Activated CD4-positive, alpha-beta T cell treated with anti-CD3 and anti-CD28 coated beads, Interleukin-2, amount 10 ng/mL, durations not matched to agents 24 days and 14 days (primary cell): ENCODE measurements at regions of chr4 and their contacts with region 1.

Region 1: GRCh38 chr4:48016141-48017103 is at the starts of genes CNGA1 and NIPAL1:
- DNase-seq: peak; percentile 91
- H3K4me3 Mint-ChIP-seq: peak within 1 kb of the TSS; percentile 80
- H3K27ac Mint-ChIP-seq: peak within 1 kb of the TSS; percentile 45
- H3K4me1 Mint-ChIP-seq: peaks cover 20% of the 10 kb centered on the region
- H3K27me3 Mint-ChIP-seq: peaks cover 30% of the 10 kb centered on the region
- total RNA-seq, gene CNGA1: not detected in 2 replicates
- total RNA-seq, gene NIPAL1: 3.6 and 3.8 TPM in 2 replicates

Region 2: GRCh38 chr4:47852136-47852535 is 164.3 kb before region 1 on chr4:
- intact Hi-C with region 1: no loop called
- DNase-seq: no peak
- H3K4me3 Mint-ChIP-seq: no peak overlapping the region
- H3K27ac Mint-ChIP-seq: no peak overlapping the region
- H3K4me1 Mint-ChIP-seq: no peaks in the 10 kb centered on the region
- H3K27me3 Mint-ChIP-seq: no peaks in the 10 kb centered on the region

Region 3: GRCh38 chr4:48027653-48028052 is 11.2 kb after region 1 on chr4:
- intact Hi-C with region 1: loop called (anchors 1 kb)
- DNase-seq: no peak
- H3K4me3 Mint-ChIP-seq: no peak overlapping the region
- H3K27ac Mint-ChIP-seq: no peak overlapping the region
- H3K4me1 Mint-ChIP-seq: peaks cover 17% of the 10 kb centered on the region
- H3K27me3 Mint-ChIP-seq: peaks cover under 1% of the 10 kb centered on the region

Region 4: DNA sequence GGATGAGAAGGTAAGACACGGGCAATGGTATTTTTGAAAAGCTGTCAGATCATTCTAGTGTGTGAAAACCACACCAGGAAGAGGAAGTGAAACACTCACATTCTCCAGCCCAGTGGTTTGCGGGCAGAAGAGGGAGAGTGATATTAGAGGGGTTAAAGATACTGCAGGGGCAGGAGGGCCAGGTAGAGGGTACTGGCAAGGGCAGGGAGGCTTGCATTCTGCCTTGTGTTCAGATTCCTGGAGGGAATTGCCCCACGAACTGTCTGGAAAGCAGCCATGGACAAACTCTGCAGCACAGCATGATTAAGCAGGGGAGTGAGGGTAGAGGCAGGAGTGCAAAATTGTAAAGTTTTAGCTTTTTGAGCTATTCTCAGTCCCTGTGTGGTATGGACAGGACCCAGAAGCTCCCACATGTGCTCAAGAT is 31.0 kb after region 1 on chr4:
- intact Hi-C with region 1: loop called (anchors 1 kb)
- DNase-seq: peak; percentile 89
- H3K4me3 Mint-ChIP-seq: peak overlapping the region; percentile 38
- H3K27ac Mint-ChIP-seq: peak overlapping the region; percentile 61
- H3K4me1 Mint-ChIP-seq: peaks cover 39% of the 10 kb centered on the region
- H3K27me3 Mint-ChIP-seq: peaks cover 62% of the 10 kb centered on the region

Region 5: GRCh38 chr4:48065587-48066052 is 49.2 kb after region 1 on chr4:
- intact Hi-C with region 1: loop called (anchors 2 kb)
- DNase-seq: no peak
- H3K4me3 Mint-ChIP-seq: no peak overlapping the region
- H3K27ac Mint-ChIP-seq: peak overlapping the region; percentile 43
- H3K4me1 Mint-ChIP-seq: peaks cover 15% of the 10 kb centered on the region
- H3K27me3 Mint-ChIP-seq: no peaks in the 10 kb centered on the region